ENCODE measurements at regions of chr1 and their contacts with region 1.

Region 1: DNA sequence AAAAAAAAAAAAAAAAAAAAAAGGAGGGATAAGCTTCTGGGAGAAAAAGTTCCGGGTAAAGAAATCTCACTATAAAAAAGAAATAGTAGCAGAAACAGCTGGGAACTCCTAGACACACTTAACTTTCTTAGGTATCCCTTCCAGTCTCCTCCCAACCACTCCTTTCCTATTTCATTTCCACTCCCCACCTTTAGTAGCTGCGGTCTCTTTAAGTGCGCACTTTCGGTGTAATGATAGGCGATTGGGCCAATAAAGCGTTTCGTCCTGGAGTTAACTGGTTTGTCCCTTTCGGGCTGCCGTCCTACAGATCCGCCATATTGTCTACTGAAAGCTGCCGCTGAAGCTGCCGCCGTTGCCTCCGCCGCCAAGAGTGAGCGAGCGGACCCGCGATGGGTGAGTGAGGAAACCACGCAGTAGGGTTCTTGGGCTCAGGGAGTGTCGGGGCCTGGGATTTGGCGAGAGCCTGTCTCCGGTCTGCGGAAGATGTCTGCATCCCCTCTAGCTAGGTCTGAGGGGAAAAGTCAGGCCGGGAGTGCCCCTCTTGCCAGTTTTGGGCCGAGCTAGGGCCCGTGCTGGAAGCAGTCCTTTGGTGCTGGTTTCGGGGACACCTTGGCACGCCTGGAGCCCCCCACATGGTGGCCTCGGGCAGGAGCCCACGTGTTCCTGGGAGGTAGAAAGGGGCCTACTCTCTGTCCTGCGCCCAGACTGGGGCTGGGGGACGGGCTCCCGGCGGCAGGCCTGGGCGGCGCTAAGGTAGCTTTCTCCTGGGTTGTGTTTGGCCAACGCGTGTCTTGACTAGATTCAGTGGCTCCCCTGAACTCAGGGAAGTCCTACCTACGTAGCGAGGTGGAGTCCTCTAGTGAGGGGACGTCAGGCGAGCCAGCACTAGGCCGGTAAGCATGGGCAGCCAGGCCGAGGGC is at the start of gene KPNA6:
- DNase-seq: peak; percentile 83 to 95 (median 91)
- H3K4me3 ChIP-seq: peak within 1 kb of the TSS; percentile 99
- H3K4me3 Mint-ChIP-seq: peak within 1 kb of the TSS; percentile 91 to 100 (median 99)
- H3K27ac ChIP-seq: peak within 1 kb of the TSS; percentile 89
- H3K27ac Mint-ChIP-seq: peak within 1 kb of the TSS; percentile 92 to 99 (median 98)
- H3K4me1 ChIP-seq: peaks cover 41% of the 10 kb centered on the region
- H3K4me1 Mint-ChIP-seq: peaks cover 42 to 55% (median 51%) of the 10 kb centered on the region in 3 donors
- H3K27me3 ChIP-seq: no peaks in the 10 kb centered on the region
- H3K27me3 Mint-ChIP-seq: no peaks in the 10 kb centered on the region
- total RNA-seq, gene KPNA6: 91.8 to 96.7 TPM

Region 2: GRCh38 chr1:32072622-32073298 is 35.2 kb before region 1 on chr1 and contains the start of gene TMEM39B:
- CTCF ChIA-PET with region 1: interaction called, 17 read pairs
- POLR2A ChIA-PET with region 1: interaction called, 40 read pairs
- DNase-seq: peak; percentile 88 to 96 (median 95)
- H3K4me3 ChIP-seq: peak within 1 kb of the TSS; percentile 52
- H3K4me3 Mint-ChIP-seq: peak within 1 kb of the TSS; percentile 85 to 99 (median 97)
- H3K27ac ChIP-seq: peak within 1 kb of the TSS; percentile 15
- H3K27ac Mint-ChIP-seq: peak within 1 kb of the TSS; percentile 72 to 99 (median 94)
- H3K4me1 ChIP-seq: peaks cover 16% of the 10 kb centered on the region
- H3K4me1 Mint-ChIP-seq: peaks cover 22 to 52% (median 38%) of the 10 kb centered on the region in 3 donors
- H3K27me3 ChIP-seq: no peaks in the 10 kb centered on the region
- H3K27me3 Mint-ChIP-seq: peaks cover 0 to 3% of the 10 kb centered on the region in 2 donors
- total RNA-seq, gene TMEM39B: 23.4 to 25.8 TPM

Region 3: DNA sequence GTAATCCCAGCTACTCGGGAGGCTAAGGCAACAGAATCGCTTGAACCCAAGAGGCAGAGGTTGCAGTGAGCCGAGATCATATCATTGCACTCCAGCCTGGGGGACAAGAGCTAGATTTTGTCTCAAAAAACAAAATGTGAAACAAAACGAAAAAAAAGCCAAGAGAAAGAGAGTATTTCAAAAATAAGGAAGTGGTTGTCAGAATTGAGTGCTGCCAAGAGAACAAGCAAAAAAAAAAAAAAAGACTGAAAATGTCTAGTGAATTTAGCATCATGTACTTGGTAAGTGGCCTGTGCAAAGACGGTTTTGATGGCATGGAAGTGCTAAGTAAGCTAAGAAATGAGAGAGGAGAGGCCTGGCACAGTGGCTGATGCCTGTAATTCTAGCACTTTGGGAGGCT is 14.1 kb after region 1 on chr1:
- CTCF ChIA-PET with region 1: interaction called, 12 read pairs
- POLR2A ChIA-PET with region 1: interaction called, 3 read pairs
- DNase-seq: no peak
- H3K4me3 ChIP-seq: no peak overlapping the region
- H3K4me3 Mint-ChIP-seq: peak overlapping the region in 4 of 7 donors; percentile 13 to 58 (median 15)
- H3K27ac ChIP-seq: no peak overlapping the region
- H3K27ac Mint-ChIP-seq: peak overlapping the region in 6 of 8 donors; percentile 40 to 72 (median 48)
- H3K4me1 ChIP-seq: peaks cover 37% of the 10 kb centered on the region
- H3K4me1 Mint-ChIP-seq: peaks cover 46 to 67% (median 46%) of the 10 kb centered on the region in 3 donors
- H3K27me3 ChIP-seq: no peaks in the 10 kb centered on the region
- H3K27me3 Mint-ChIP-seq: no peaks in the 10 kb centered on the region

Region 4: DNA sequence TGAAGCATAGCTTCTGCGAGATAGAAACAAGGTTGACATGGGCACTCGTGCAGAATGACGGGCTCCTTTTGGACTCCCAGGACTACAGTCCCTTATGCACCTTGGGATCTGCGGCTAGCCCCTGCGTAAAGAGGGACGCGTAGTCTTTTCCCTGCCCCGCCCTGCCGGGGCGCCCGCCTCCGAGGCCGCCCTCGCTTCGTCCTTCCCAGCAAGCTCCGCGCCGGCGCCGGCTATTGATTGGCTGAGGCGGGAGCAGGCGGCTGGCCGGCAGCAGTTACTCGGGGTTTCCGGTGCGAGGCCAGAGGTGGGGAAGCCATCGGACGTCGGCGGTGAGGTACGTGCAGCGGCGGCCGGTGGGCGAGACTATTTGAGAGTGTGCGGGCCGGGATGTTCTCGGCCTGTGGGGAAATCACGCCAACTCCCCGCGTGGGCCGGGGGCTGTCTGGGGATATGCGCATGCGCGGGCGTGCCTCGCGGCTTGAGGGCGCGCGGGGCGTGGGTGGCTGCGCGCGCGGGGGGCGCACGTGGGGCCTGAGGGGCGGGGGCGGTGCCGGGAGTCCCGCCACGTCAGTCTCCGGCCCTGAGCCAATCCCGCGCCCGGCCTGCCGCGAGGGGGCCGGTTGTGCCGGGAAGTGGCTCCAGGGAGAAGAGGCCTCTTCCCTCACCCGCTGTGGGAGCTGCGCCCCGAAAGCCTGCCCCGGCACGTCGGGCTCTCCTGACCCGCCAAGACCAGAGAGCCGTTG is 71.6 kb after region 1 on chr1 and contains the start of gene TXLNA:
- CTCF ChIA-PET with region 1: interaction called, 6 read pairs
- POLR2A ChIA-PET with region 1: interaction called, 10 read pairs
- DNase-seq: peak; percentile 83 to 91 (median 87)
- H3K4me3 ChIP-seq: peak within 1 kb of the TSS; percentile 74
- H3K4me3 Mint-ChIP-seq: peak within 1 kb of the TSS; percentile 86 to 99 (median 91)
- H3K27ac ChIP-seq: peak within 1 kb of the TSS; percentile 88
- H3K27ac Mint-ChIP-seq: peak within 1 kb of the TSS; percentile 91 to 98 (median 94)
- H3K4me1 ChIP-seq: peaks cover 28% of the 10 kb centered on the region
- H3K4me1 Mint-ChIP-seq: peaks cover 35 to 51% (median 45%) of the 10 kb centered on the region in 3 donors
- H3K27me3 ChIP-seq: no peaks in the 10 kb centered on the region
- H3K27me3 Mint-ChIP-seq: no peaks in the 10 kb centered on the region
- total RNA-seq, gene TXLNA: 99.0 to 99.9 TPM

Region 5: DNA sequence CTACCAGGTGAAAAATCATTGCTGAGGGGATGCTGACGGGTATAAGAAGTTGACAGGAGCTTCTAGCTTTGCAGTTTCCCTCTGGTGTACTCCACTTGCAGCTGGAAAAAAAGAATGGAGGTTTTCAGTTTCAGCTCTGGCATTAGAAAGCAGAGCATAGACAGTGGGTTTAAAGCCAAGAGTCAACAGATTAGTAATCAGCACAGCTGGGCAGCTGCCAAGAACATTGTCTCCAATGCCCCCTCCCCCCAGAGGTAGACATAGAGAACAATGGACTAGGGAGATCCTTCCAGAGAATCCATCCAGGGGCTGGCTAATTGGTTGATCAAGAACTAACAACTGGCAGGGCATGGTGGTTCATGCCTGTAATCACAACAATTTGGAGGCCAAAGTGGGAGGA is 346.7 kb after region 1 on chr1:
- CTCF ChIA-PET with region 1: no interaction called
- POLR2A ChIA-PET with region 1: no interaction called
- DNase-seq: no peak
- H3K4me3 ChIP-seq: no peak overlapping the region
- H3K4me3 Mint-ChIP-seq: no peak overlapping the region
- H3K27ac ChIP-seq: no peak overlapping the region
- H3K27ac Mint-ChIP-seq: no peak overlapping the region
- H3K4me1 ChIP-seq: no peaks in the 10 kb centered on the region
- H3K4me1 Mint-ChIP-seq: no peaks in the 10 kb centered on the region
- H3K27me3 ChIP-seq: no peaks in the 10 kb centered on the region
- H3K27me3 Mint-ChIP-seq: peaks cover 5 to 38% of the 10 kb centered on the region in 2 donors